ENCODE measurements at regions of chr18 and their contacts with region 1.

Region 1: DNA sequence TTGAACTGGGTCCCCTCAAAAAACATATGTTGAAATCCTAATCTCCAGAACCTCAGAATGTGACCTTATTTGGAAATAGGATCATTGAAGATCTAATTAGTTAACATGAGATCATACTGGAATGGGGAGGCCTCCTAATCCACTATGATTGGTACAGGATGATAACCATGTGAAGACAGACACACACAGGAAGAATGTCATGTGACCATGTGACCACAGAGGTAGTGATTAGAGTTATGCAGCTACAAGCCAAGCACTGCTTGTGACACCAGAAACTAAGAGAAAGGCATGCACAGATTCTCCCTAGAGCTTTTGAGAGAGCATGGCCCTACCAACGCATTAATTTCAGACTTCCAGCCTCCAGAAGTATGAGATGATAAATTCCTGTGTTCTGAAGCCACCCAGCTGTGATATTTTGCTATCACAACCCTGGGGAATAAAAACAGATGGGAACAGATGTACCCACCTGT is 47.0 kb upstream of the TGIF1 start:
- DNase-seq: peak; percentile 68
- H3K4me3 ChIP-seq: peak overlapping the region; percentile 19
- H3K27ac ChIP-seq: peak overlapping the region; percentile 84
- H3K4me1 ChIP-seq: peaks cover 44% of the 10 kb centered on the region
- CTCF ChIP-seq: no peak

Region 2: GRCh38 chr18:3029215-3029952 is 373.6 kb before region 1 on chr18:
- CTCF ChIA-PET with region 1: no interaction called
- POLR2A ChIA-PET with region 1: no interaction called
- intact Hi-C with region 1: no loop called
- DNase-seq: no peak
- H3K4me3 ChIP-seq: no peak overlapping the region
- H3K27ac ChIP-seq: no peak overlapping the region
- H3K4me1 ChIP-seq: no peaks in the 10 kb centered on the region
- CTCF ChIP-seq: no peak

Region 3: GRCh38 chr18:3297025-3297984 is 105.7 kb before region 1 on chr18:
- CTCF ChIA-PET with region 1: no interaction called
- POLR2A ChIA-PET with region 1: interaction called, 4 read pairs
- intact Hi-C with region 1: loop called (anchors 5 kb)
- DNase-seq: peak; percentile 97
- H3K4me3 ChIP-seq: peak overlapping the region; percentile 85
- H3K27ac ChIP-seq: peak overlapping the region; percentile 57
- H3K4me1 ChIP-seq: peaks cover 10% of the 10 kb centered on the region
- CTCF ChIP-seq: peak; percentile 98

Region 4: GRCh38 chr18:3380384-3380961 is 22.5 kb before region 1 on chr18:
- CTCF ChIA-PET with region 1: no interaction called
- POLR2A ChIA-PET with region 1: interaction called, 10 read pairs
- intact Hi-C with region 1: no loop called
- DNase-seq: no peak
- H3K4me3 ChIP-seq: no peak overlapping the region
- H3K27ac ChIP-seq: no peak overlapping the region
- H3K4me1 ChIP-seq: no peaks in the 10 kb centered on the region
- CTCF ChIP-seq: 0 out of 2 replicates have a peak, but pooled peaks have one; percentile 11